GM10248 (cell line): ENCODE measurements at regions of chrX and their contacts with region 1.

Region 1: DNA sequence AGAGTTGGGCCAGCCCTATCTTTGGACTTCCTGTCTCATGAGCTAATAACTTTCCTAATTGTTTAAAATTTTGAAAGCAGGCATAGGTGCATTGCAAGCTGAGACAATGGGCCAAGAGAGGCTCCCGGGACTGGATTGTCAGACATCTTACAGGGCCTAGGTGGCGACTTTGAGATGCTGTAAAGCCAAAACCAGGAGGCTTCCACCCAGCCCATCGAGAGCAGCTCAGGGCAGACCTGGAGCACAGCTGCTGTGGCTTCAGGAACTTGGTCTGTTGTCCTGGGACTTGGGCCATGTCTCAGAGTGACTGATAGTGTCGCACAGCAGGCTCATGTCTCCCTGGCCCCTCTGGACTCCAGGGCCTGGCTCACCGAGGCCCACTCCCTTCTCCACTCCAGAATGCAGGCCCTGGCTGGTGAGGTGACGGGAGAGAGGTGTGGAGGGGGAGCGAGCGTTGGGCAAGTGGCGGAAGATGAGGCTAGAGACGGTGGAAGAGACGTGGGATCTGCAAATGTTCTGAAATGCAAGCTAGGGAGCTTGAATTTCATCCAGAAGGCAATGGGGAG is 24.1 kb upstream of the MTM1 start:
- DNase-seq: no peak
- CTCF ChIP-seq: no peak

Region 2: DNA sequence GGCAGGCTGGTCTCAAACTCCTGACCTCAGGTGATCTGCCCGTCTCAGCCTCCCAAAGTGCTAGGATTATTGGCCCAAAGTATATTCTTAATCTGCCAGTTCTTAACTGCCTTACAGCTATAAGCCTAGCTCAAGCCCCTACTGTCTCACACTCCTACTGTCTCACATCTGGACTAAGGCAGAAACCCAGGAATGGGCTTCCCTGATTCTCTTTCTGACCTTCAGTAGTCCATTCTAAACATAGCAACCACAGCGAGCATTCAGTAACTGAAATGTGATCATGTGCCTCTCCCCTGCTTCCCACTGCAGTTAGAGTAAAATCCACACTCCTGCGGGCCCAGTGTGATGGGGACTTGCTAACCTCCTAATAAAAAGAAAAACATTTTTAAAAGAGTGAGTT is 207.8 kb after region 1 on chrX:
- CTCF ChIA-PET with region 1: no interaction called
- POLR2A ChIA-PET with region 1: interaction called, 10 read pairs
- DNase-seq: no peak
- CTCF ChIP-seq: no peak

Region 3: GRCh38 chrX:150779385-150779784 is 235.1 kb after region 1 on chrX:
- CTCF ChIA-PET with region 1: no interaction called
- POLR2A ChIA-PET with region 1: no interaction called
- DNase-seq: no peak
- CTCF ChIP-seq: no peak